ENCODE measurements at regions of chr10 and their contacts with region 1.

Region 1: DNA sequence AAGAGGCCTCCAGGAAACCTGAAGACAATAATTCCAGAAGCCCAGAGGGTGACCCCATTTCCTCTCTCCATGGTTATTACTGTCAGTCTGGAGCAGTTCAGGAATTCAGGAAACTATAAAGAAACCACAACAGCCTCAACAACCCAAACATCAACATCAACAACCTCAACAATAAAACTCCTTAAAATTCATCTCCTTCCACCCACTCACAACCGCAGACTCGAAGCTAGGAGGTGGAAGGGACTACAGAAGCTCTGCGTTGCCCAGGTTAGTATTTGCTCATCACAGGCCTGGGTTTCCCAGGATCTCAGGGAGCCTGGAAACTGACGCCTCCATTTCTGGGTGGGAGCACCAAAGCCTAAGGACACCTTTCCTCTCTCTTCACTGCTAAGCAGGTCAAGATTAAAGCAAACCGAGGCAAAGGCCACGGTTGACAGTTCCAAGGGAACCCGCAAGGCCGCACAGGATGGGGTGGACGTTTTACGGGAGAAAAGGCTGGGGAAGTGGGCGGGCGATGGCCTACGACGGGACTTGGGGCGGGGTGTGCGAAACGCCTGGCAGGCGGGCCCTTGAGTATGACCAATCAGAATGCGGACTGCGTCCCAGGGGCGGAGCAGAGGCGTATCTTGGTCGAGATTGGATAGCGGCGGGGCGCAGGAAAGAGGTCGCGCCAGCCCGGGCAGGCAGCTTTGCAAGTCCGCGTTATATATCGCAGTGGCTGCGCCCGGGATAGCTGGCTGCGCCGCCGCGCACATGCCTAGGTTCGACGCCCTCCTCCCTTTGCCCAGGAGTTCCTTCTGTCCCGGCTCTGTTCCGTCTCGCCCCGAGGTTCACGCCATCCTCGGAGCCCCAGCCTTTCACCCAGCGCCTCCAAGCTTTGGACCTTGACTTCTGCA is at the start of gene ELOVL3:
- DNase-seq: peak; percentile 61 to 93 (median 82)
- ATAC-seq: peak; percentile 89
- H3K4me3 ChIP-seq: peak within 1 kb of the TSS; percentile 37 to 40
- H3K4me3 Mint-ChIP-seq: peak within 1 kb of the TSS; percentile 66
- H3K27ac ChIP-seq: no peak within 1 kb of the TSS
- H3K27ac Mint-ChIP-seq: peak within 1 kb of the TSS; percentile 60
- H3K4me1 ChIP-seq: peaks cover 19% of the 10 kb centered on the region
- H3K4me1 Mint-ChIP-seq: peaks cover 19% of the 10 kb centered on the region
- H3K27me3 ChIP-seq: peaks cover 11 to 14% of the 10 kb centered on the region in 2 experiments
- H3K27me3 Mint-ChIP-seq: peaks cover 47% of the 10 kb centered on the region
- CTCF ChIP-seq: no peak
- total RNA-seq, gene ELOVL3: not detected

Region 2: DNA sequence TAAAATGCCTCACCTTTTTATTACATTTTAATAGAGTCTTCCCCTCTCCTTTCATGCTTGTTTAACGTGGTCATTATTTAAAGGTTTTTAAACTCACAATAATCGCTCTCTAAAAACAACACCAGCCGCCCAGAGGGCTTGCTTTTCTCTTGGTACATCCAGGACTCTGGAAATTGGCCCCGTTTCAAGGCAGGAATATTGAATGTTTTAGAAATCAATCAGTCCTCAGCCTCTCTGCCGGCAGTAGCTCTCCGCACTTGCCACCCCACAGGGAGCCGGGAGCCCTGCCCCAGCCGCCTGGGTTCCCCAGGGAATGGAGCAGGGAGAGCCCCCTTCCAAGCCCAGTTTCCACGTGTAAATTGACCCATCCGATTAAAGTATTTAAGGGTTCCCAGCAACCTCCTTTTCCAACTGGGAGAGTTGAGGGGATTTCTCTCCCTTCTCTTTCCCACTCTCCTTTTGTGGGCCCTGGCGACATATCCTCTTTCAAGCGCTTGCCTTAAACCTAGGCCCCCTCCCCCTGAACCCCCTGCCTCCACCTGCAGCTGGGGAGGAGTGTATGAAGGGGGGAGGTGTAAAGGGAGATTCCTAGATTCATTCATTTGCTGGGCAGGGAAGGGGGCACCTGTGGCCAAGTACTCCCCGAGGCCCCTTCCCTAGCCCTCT is 451.8 kb before region 1 on chr10:
- CTCF ChIA-PET with region 1: no interaction called
- POLR2A ChIA-PET with region 1: no interaction called
- intact Hi-C with region 1: no loop called
- DNase-seq: no peak
- ATAC-seq: no peak
- H3K4me3 ChIP-seq: no peak overlapping the region
- H3K4me3 Mint-ChIP-seq: peak overlapping the region; percentile 8
- H3K27ac ChIP-seq: no peak overlapping the region
- H3K27ac Mint-ChIP-seq: no peak overlapping the region
- H3K4me1 ChIP-seq: peaks cover 27% of the 10 kb centered on the region
- H3K4me1 Mint-ChIP-seq: peaks cover 30% of the 10 kb centered on the region
- H3K27me3 ChIP-seq: peaks cover 38 to 40% of the 10 kb centered on the region in 2 experiments
- H3K27me3 Mint-ChIP-seq: peaks cover 60% of the 10 kb centered on the region
- CTCF ChIP-seq: no peak

Region 3: GRCh38 chr10:102185811-102186527 is 39.9 kb before region 1 on chr10:
- CTCF ChIA-PET with region 1: interaction called, 10 read pairs
- POLR2A ChIA-PET with region 1: no interaction called
- intact Hi-C with region 1: no loop called
- DNase-seq: no peak
- ATAC-seq: no peak
- H3K4me3 ChIP-seq: no peak overlapping the region
- H3K4me3 Mint-ChIP-seq: no peak overlapping the region
- H3K27ac ChIP-seq: no peak overlapping the region
- H3K27ac Mint-ChIP-seq: no peak overlapping the region
- H3K4me1 ChIP-seq: peaks cover 6% of the 10 kb centered on the region
- H3K4me1 Mint-ChIP-seq: peaks cover 11% of the 10 kb centered on the region
- H3K27me3 ChIP-seq: no peaks in the 10 kb centered on the region
- H3K27me3 Mint-ChIP-seq: no peaks in the 10 kb centered on the region
- CTCF ChIP-seq: no peak

Region 4: GRCh38 chr10:102280397-102281101 is 54.7 kb after region 1 on chr10:
- CTCF ChIA-PET with region 1: interaction called, 12 read pairs
- POLR2A ChIA-PET with region 1: no interaction called
- intact Hi-C with region 1: no loop called
- DNase-seq: no peak
- ATAC-seq: no peak
- H3K4me3 ChIP-seq: no peak overlapping the region
- H3K4me3 Mint-ChIP-seq: peak overlapping the region; percentile 2
- H3K27ac ChIP-seq: no peak overlapping the region
- H3K27ac Mint-ChIP-seq: peak overlapping the region; percentile 56
- H3K4me1 ChIP-seq: peaks cover 23% of the 10 kb centered on the region
- H3K4me1 Mint-ChIP-seq: peaks cover 54% of the 10 kb centered on the region
- H3K27me3 ChIP-seq: no peaks in the 10 kb centered on the region
- H3K27me3 Mint-ChIP-seq: no peaks in the 10 kb centered on the region
- CTCF ChIP-seq: no peak

Region 5: GRCh38 chr10:102368072-102368471 is 142.2 kb after region 1 on chr10:
- CTCF ChIA-PET with region 1: interaction called, 13 read pairs
- POLR2A ChIA-PET with region 1: no interaction called
- intact Hi-C with region 1: no loop called
- DNase-seq: no peak
- ATAC-seq: no peak
- H3K4me3 ChIP-seq: no peak overlapping the region
- H3K4me3 Mint-ChIP-seq: no peak overlapping the region
- H3K27ac ChIP-seq: no peak overlapping the region
- H3K27ac Mint-ChIP-seq: no peak overlapping the region
- H3K4me1 ChIP-seq: no peaks in the 10 kb centered on the region
- H3K4me1 Mint-ChIP-seq: no peaks in the 10 kb centered on the region
- H3K27me3 ChIP-seq: no peaks in the 10 kb centered on the region
- H3K27me3 Mint-ChIP-seq: no peaks in the 10 kb centered on the region
- CTCF ChIP-seq: no peak

Region 6: DNA sequence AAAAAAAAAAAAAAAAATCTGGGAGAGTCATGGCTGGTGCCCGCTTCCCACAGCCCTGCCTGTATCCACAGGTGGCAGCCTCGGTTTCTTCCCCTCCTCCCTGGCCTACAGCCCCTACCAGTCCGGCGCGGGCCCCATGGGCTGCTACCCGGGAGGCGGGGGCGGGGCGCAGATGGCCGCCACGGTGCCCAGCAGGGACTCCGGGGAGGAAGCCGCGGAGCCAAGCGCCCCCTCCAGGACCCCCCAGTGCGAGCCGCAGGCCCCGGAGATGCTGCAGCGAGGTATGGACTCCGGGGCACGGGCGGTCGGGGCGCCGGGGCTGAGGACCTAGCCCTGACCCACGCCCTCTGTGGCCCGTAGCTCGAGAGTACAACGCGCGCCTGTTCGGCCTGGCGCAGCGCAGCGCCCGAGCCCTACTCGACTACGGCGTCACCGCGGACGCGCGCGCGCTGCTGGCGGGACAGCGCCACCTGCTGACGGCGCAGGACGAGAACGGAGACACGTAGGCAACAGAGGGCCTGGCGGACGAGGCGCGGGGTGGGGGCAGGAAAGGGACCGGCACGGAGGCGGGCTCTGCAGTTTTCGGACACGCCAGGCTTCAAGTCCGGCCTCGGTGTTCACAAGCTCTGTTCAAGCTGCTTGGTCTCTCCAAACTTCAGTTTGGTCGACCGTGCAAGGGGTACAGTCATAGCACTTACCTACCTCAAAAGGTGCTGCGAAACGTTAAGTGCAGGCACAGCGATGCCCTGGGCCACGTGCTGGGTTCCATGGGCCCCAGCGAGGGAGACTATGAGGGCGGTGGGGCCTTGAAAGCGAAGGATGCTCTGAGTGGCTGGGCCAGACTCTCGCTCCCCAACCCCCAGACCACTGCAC is 173.6 kb after region 1 on chr10:
- CTCF ChIA-PET with region 1: interaction called, 39 read pairs
- POLR2A ChIA-PET with region 1: interaction called, 5 read pairs
- intact Hi-C with region 1: loop called in 1 of 2 experiments (anchors 1 kb)
- DNase-seq: peak; percentile 78 to 95 (median 87)
- ATAC-seq: peak; percentile 51
- H3K4me3 ChIP-seq: peak overlapping the region; percentile 44 to 65
- H3K4me3 Mint-ChIP-seq: peak overlapping the region; percentile 76
- H3K27ac ChIP-seq: peak overlapping the region; percentile 59 to 86
- H3K27ac Mint-ChIP-seq: peak overlapping the region; percentile 81
- H3K4me1 ChIP-seq: peaks cover 30% of the 10 kb centered on the region
- H3K4me1 Mint-ChIP-seq: peaks cover 38% of the 10 kb centered on the region
- H3K27me3 ChIP-seq: no peaks in the 10 kb centered on the region
- H3K27me3 Mint-ChIP-seq: no peaks in the 10 kb centered on the region
- CTCF ChIP-seq: peak; percentile 89

Region 7: GRCh38 chr10:102583435-102584417 is 357.8 kb after region 1 on chr10:
- CTCF ChIA-PET with region 1: interaction called, 42 read pairs
- POLR2A ChIA-PET with region 1: no interaction called
- intact Hi-C with region 1: loop called (anchors 1 kb)
- DNase-seq: peak; percentile 67 to 87 (median 82)
- ATAC-seq: peak; percentile 98
- H3K4me3 ChIP-seq: no peak overlapping the region
- H3K4me3 Mint-ChIP-seq: no peak overlapping the region
- H3K27ac ChIP-seq: no peak overlapping the region
- H3K27ac Mint-ChIP-seq: no peak overlapping the region
- H3K4me1 ChIP-seq: no peaks in the 10 kb centered on the region
- H3K4me1 Mint-ChIP-seq: peaks cover 4% of the 10 kb centered on the region
- H3K27me3 ChIP-seq: no peaks in the 10 kb centered on the region
- H3K27me3 Mint-ChIP-seq: no peaks in the 10 kb centered on the region
- CTCF ChIP-seq: peak; percentile 78

Measured in CD8-positive, alpha-beta T cell (primary cell).